Mammary epithelial cell (primary cell): ENCODE measurements at regions of chr21 and their contacts with region 1.

Region 1: DNA sequence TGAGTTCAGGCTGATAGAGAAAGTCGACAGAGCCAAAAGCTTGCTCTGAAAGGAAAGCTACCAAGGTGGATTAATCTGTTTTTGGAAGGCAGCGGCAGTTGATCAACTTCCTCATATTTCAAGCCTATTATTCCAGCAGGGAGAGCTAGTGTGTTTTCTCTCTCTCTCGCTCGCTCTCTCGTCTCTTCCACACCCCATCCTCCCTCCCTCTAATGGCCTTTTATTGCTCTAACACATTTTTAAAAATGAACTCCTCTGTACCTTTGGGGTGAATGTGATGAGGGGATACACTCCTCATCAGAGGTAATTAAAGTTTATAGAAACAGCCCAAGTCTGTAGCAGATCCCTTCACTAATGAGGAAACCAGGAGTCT is 126.4 kb downstream of the CLIC6 start:
- DNase-seq: no peak
- H3K4me3 ChIP-seq: no peak overlapping the region
- H3K27ac ChIP-seq: peak overlapping the region; percentile 83
- H3K4me1 ChIP-seq: peaks cover 54% of the 10 kb centered on the region
- H3K27me3 ChIP-seq: no peaks in the 10 kb centered on the region
- CTCF ChIP-seq: peak in 1 of 2 donors; percentile 22

Region 2: DNA sequence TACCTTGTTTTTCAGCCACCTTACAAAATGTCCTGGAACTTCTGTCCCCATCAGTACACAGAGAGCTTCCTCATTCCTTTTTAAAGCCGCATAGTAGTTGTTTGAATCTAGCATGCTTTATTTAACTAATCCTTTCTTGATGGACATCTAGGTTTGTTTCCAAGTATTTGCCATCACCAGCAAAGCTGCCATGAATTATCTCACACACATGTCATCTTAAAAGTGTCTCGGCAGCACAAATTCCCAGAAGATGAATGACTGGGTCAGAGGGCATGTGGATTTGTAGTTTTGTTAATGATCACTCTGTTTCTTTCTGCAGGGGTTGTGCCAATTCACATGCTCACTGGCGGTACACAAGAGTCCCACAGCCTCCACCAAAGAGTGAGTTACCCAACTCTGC is 58.1 kb before region 1 on chr21:
- CTCF ChIA-PET with region 1: no interaction called
- dilution Hi-C with region 1: no loop called
- in situ Hi-C with region 1: no loop called
- intact Hi-C with region 1: no loop called
- DNase-seq: no peak
- H3K4me3 ChIP-seq: no peak overlapping the region
- H3K27ac ChIP-seq: no peak overlapping the region
- H3K4me1 ChIP-seq: peaks cover 30% of the 10 kb centered on the region
- H3K27me3 ChIP-seq: no peaks in the 10 kb centered on the region
- CTCF ChIP-seq: no peak

Region 3: DNA sequence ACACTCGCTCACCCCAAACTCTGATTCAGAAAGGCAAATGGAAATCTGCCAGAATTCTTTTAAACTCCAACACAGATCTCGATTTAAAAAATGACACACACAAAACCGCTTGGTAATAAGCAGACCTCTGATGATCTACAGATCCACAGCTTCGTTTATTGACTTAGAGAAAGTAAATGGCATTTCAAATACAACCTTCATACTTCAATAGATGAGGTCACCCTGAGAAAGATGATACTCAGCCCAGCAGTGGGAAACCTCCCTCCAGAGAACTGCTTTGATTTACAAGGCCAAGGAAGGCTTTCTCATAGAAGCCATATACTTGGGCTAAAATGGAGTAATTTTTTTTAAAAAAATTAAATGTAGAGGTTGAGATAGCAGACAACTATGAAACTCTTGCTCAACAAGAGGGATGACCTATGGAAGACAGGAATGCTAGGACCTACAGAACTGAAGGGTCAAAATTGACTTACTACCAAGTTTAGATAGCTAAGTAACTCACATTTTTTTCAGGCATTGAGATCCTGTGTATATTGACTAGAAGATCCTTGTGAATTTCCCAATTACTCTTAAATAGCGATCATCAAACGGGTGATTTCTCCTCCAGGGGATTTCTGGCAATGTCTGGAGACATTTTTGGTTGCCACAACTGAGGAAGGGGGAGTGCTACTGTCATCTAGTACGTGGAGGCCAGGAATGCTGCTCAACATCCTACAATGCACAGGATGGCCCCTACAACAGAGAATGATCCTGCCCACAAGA is 17.5 kb after region 1 on chr21:
- CTCF ChIA-PET with region 1: no interaction called
- dilution Hi-C with region 1: no loop called
- in situ Hi-C with region 1: no loop called
- intact Hi-C with region 1: loop called (anchors 1 kb)
- DNase-seq: peak; percentile 81
- H3K4me3 ChIP-seq: no peak overlapping the region
- H3K27ac ChIP-seq: peak overlapping the region; percentile 94
- H3K4me1 ChIP-seq: peaks cover 98% of the 10 kb centered on the region
- H3K27me3 ChIP-seq: no peaks in the 10 kb centered on the region
- CTCF ChIP-seq: no peak

Region 4: GRCh38 chr21:34881894-34882371 is 86.8 kb after region 1 on chr21:
- CTCF ChIA-PET with region 1: no interaction called
- dilution Hi-C with region 1: no loop called
- in situ Hi-C with region 1: no loop called
- intact Hi-C with region 1: loop called (anchors 1 kb)
- DNase-seq: peak; percentile 82
- H3K4me3 ChIP-seq: peak overlapping the region; percentile 89 to 99 (median 94)
- H3K27ac ChIP-seq: peak overlapping the region; percentile 97
- H3K4me1 ChIP-seq: peaks cover 32% of the 10 kb centered on the region
- H3K27me3 ChIP-seq: no peaks in the 10 kb centered on the region
- CTCF ChIP-seq: no peak